Activated CD4-positive, alpha-beta T cell treated with anti-CD3 and anti-CD28 coated beads for 36 hours (primary cell): ENCODE measurements at regions of chr17 and their contacts with region 1.

Region 1: GRCh38 chr17:13194887-13195286 is 177.1 kb upstream of the ELAC2 start:
- DNase-seq: no peak
- ATAC-seq: no peak
- H3K4me3 Mint-ChIP-seq: no peak overlapping the region
- H3K27ac Mint-ChIP-seq: no peak overlapping the region
- H3K4me1 Mint-ChIP-seq: no peaks in the 10 kb centered on the region
- H3K27me3 Mint-ChIP-seq: no peaks in the 10 kb centered on the region

Region 2: GRCh38 chr17:13182462-13183253 is 12.2 kb before region 1 on chr17:
- CTCF ChIA-PET with region 1: no interaction called
- POLR2A ChIA-PET with region 1: no interaction called
- intact Hi-C with region 1: no loop called
- DNase-seq: no peak
- ATAC-seq: no peak
- H3K4me3 Mint-ChIP-seq: no peak overlapping the region
- H3K27ac Mint-ChIP-seq: no peak overlapping the region
- H3K4me1 Mint-ChIP-seq: no peaks in the 10 kb centered on the region
- H3K27me3 Mint-ChIP-seq: no peaks in the 10 kb centered on the region

Region 3: DNA sequence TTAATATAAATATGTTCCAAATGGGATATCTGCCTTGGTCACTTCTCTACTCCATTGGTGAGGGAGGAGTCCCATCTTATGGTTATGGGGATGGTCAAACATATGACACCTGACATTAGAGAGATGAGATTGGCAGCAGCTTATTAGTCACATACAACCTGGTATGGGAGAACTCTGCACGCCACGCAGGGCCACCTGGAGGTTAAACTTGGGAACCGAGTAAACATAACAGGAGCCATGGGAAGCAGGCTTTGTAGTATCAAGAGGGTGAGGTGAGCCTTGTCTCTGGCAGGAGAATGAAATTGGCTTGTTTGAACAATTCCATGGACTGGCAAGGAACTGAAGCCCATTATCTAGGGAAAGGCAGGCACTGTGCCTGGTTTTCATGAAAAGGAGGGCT is 61.6 kb after region 1 on chr17:
- CTCF ChIA-PET with region 1: no interaction called
- POLR2A ChIA-PET with region 1: no interaction called
- intact Hi-C with region 1: loop called in 1 of 2 experiments (anchors 10 kb)
- DNase-seq: no peak
- ATAC-seq: no peak
- H3K4me3 Mint-ChIP-seq: no peak overlapping the region
- H3K27ac Mint-ChIP-seq: no peak overlapping the region
- H3K4me1 Mint-ChIP-seq: no peaks in the 10 kb centered on the region
- H3K27me3 Mint-ChIP-seq: no peaks in the 10 kb centered on the region

Region 4: DNA sequence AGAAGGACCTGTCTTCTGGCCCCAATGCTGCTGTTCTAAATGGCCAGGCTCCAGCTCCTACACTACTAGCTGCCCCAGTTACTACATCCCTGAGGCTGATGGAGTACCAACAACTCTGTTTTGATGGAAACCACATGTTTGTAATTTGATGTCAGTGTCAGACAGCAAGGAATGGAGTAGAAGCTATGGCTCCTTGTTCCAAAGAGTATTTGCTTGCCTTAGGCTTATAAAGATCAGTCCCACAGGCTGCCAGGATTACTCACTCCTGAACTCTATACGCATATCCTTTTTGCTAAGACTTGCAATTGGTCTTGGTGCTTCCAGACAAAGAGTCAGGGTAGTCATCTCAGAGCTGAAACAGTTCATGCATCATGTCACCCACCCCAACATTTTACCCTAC is 267.3 kb after region 1 on chr17:
- CTCF ChIA-PET with region 1: no interaction called
- POLR2A ChIA-PET with region 1: no interaction called
- intact Hi-C with region 1: no loop called
- DNase-seq: no peak
- ATAC-seq: no peak
- H3K4me3 Mint-ChIP-seq: no peak overlapping the region
- H3K27ac Mint-ChIP-seq: no peak overlapping the region
- H3K4me1 Mint-ChIP-seq: no peaks in the 10 kb centered on the region
- H3K27me3 Mint-ChIP-seq: peaks cover 2% of the 10 kb centered on the region

Region 5: DNA sequence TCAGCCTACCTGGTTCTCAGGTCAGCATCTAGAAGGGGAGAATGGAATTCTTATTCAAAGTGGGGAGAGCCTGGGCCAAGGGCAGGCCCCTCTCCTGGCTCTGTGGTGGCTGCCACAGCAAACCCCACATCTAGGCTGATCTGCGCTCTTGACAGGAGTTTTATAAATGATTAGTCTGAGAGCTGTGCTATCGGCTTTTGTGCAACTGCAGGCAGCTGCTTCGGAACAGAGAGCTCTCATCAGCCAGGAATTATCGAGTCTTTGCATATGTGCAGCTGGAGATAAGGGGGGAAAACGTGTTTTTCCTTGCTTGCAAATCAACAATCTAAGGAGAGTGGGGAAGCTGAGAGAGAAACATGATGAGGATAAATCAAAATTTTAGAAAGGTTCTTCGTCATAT is 315.2 kb after region 1 on chr17:
- CTCF ChIA-PET with region 1: no interaction called
- POLR2A ChIA-PET with region 1: no interaction called
- intact Hi-C with region 1: no loop called
- DNase-seq: no peak
- ATAC-seq: no peak
- H3K4me3 Mint-ChIP-seq: no peak overlapping the region
- H3K27ac Mint-ChIP-seq: no peak overlapping the region
- H3K4me1 Mint-ChIP-seq: no peaks in the 10 kb centered on the region
- H3K27me3 Mint-ChIP-seq: peaks cover 18% of the 10 kb centered on the region